CD8-positive, alpha-beta T cell (primary cell): ENCODE measurements at regions of chr6 and their contacts with region 1.

Region 1: DNA sequence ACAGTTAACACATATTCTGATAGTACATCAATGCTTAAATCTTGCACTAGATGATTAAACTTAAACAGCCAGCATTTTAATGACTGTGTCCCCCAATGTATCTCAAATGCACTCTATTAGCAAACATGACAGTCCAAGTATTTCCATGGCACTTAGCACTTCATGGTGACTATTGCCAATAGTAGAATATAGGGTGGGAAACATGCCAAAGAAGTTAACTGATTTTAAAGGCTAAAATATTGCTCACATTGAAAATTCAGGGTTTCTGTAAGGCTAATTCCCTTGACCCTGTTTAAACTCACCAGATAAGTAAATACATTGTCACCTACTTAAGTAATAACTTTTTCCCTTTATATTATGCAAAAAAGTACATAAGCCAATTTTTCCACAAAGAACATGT is 266.9 kb downstream of the TBC1D32 start:
- DNase-seq: no peak
- ATAC-seq: no peak
- H3K4me3 ChIP-seq: no peak overlapping the region
- H3K4me3 Mint-ChIP-seq: no peak overlapping the region
- H3K27ac ChIP-seq: no peak overlapping the region
- H3K27ac Mint-ChIP-seq: no peak overlapping the region
- H3K4me1 ChIP-seq: no peaks in the 10 kb centered on the region
- H3K4me1 Mint-ChIP-seq: no peaks in the 10 kb centered on the region
- H3K27me3 ChIP-seq: no peaks in the 10 kb centered on the region
- H3K27me3 Mint-ChIP-seq: no peaks in the 10 kb centered on the region
- CTCF ChIP-seq: no peak

Region 2: GRCh38 chr6:121023710-121024109 is 43.7 kb before region 1 on chr6:
- CTCF ChIA-PET with region 1: no interaction called
- POLR2A ChIA-PET with region 1: no interaction called
- intact Hi-C with region 1: loop called in 1 of 2 experiments (anchors 1 kb)
- DNase-seq: no peak
- ATAC-seq: no peak
- H3K4me3 ChIP-seq: no peak overlapping the region
- H3K4me3 Mint-ChIP-seq: no peak overlapping the region
- H3K27ac ChIP-seq: no peak overlapping the region
- H3K27ac Mint-ChIP-seq: no peak overlapping the region
- H3K4me1 ChIP-seq: no peaks in the 10 kb centered on the region
- H3K4me1 Mint-ChIP-seq: no peaks in the 10 kb centered on the region
- H3K27me3 ChIP-seq: no peaks in the 10 kb centered on the region
- H3K27me3 Mint-ChIP-seq: no peaks in the 10 kb centered on the region
- CTCF ChIP-seq: no peak